ENCODE measurements at regions of chr18 and their contacts with region 1.

Region 1: DNA sequence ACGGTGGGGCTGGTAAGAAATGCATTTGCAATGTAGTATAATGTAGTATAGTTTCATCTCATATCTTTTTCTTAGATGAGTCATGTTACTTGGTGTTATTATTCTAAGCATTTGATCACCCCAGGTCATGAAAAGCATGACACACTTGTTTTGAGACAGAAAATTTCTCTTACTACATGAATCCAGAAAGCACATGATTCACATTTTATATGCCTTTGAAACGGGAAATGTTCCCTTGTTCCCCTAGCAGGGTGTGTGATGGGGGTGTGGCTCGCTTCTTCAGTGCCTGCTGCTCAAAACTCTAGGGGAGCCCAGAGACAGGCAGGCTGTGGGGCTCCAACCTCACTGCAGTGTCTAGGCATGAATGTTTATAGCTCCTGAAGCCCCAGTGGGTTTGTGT is 116.0 kb upstream of the RAB27B start:
- DNase-seq: peak; percentile 40
- H3K4me3 Mint-ChIP-seq: no peak overlapping the region
- H3K27ac Mint-ChIP-seq: no peak overlapping the region
- H3K4me1 Mint-ChIP-seq: peaks cover 29% of the 10 kb centered on the region
- H3K27me3 Mint-ChIP-seq: peaks cover 5% of the 10 kb centered on the region

Region 2: GRCh38 chr18:54852780-54853675 is 140.7 kb after region 1 on chr18:
- CTCF ChIA-PET with region 1: no interaction called
- POLR2A ChIA-PET with region 1: no interaction called
- intact Hi-C with region 1: loop called (anchors 2 kb)
- DNase-seq: no peak
- H3K4me3 Mint-ChIP-seq: no peak overlapping the region
- H3K27ac Mint-ChIP-seq: no peak overlapping the region
- H3K4me1 Mint-ChIP-seq: peaks cover 14% of the 10 kb centered on the region
- H3K27me3 Mint-ChIP-seq: no peaks in the 10 kb centered on the region

Measured in activated CD4-positive, alpha-beta memory T cell treated with anti-CD3 and anti-CD28 coated beads for 36 hours (primary cell).